Sigmoid colon (tissue), 7 donors: ENCODE measurements at regions of chr12 and their contacts with region 1.

Region 1: DNA sequence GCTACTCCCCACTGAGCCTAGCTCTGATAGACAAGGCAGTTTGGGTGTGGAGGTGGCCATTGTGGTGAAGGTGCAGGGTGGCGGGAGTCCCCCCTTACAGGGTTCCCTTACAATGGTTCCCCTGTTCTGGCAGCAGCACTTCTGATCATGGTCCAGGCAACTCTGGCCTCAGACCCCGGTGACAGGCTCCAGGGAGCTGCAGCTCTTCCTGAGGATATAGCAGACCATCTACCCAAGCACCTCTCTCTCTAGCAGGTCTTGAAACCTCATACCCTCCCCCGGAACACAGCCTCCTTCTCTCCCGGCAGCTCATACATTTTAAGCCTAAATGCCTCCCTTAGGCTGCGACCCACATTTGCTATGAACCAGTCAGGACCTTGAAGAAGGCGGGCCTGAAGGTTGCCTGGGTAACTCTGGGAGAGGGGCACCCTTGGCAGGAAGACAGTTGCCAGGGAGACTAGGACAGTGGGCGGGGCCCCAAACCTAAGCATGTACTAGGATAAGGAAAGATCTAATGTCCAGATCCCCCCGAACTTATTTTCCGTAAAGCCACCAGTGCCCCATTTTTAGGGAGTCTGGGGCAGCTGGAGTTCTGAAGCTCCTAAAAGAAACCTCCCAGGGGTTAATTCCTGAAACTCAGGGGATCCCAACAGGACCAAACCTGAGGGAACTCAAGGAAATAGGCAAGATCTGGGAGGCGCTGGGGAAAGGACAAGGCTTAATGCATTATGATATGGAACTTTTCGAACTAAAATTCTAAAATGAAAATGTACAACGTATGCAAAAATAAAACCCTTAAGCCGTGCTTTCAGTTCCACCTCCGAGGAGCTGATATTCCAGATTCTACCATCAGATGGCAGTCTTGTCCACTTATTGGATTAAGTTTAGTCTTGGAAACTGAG is 4.5 kb upstream of the GDF11 start:
- DNase-seq: peak; percentile 91
- H3K4me3 ChIP-seq: peak overlapping the region; percentile 39 to 62 (median 52)
- H3K27ac ChIP-seq: peak overlapping the region; percentile 78 to 83 (median 80)
- H3K4me1 ChIP-seq: peaks cover 0 to 28% (median 20%) of the 10 kb centered on the region in 4 donors
- H3K27me3 ChIP-seq: no peaks in the 10 kb centered on the region
- CTCF ChIP-seq: peak; percentile 78 to 95 (median 88)
- EP300 ChIP-seq: no peak
- POLR2A ChIP-seq: no peak

Region 2: GRCh38 chr12:55619354-55620138 is 118.8 kb before region 1 on chr12:
- intact Hi-C with region 1: no loop called
- DNase-seq: no peak
- H3K4me3 ChIP-seq: no peak overlapping the region
- H3K27ac ChIP-seq: no peak overlapping the region
- H3K4me1 ChIP-seq: no peaks in the 10 kb centered on the region
- H3K27me3 ChIP-seq: no peaks in the 10 kb centered on the region
- CTCF ChIP-seq: peak; percentile 56 to 73 (median 65)
- EP300 ChIP-seq: no peak
- POLR2A ChIP-seq: no peak

Region 3: DNA sequence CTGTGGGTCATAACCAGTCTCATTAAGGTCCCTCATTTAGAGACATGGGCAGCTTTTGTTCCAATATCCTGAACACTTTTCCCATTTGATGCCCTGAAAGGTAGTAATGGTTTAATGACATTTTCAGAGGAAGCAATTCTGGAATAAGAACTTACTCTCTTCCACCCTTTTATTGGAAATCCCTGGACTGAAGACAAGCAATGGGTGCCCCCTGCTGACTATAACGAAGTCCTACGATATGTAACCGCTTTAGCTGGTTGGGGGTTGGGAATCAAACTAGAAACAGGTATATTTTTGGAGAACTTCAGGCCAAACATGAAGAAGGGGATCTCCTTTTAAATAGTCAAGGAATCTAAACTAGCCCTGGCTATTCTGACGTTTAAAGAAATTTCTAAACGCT is 58.7 kb after region 1 on chr12:
- intact Hi-C with region 1: loop called (anchors 2 kb)
- DNase-seq: no peak
- H3K4me3 ChIP-seq: no peak overlapping the region
- H3K27ac ChIP-seq: no peak overlapping the region
- H3K4me1 ChIP-seq: no peaks in the 10 kb centered on the region
- H3K27me3 ChIP-seq: no peaks in the 10 kb centered on the region
- CTCF ChIP-seq: peak; percentile 20 to 53 (median 32)
- EP300 ChIP-seq: no peak
- POLR2A ChIP-seq: no peak

Region 4: DNA sequence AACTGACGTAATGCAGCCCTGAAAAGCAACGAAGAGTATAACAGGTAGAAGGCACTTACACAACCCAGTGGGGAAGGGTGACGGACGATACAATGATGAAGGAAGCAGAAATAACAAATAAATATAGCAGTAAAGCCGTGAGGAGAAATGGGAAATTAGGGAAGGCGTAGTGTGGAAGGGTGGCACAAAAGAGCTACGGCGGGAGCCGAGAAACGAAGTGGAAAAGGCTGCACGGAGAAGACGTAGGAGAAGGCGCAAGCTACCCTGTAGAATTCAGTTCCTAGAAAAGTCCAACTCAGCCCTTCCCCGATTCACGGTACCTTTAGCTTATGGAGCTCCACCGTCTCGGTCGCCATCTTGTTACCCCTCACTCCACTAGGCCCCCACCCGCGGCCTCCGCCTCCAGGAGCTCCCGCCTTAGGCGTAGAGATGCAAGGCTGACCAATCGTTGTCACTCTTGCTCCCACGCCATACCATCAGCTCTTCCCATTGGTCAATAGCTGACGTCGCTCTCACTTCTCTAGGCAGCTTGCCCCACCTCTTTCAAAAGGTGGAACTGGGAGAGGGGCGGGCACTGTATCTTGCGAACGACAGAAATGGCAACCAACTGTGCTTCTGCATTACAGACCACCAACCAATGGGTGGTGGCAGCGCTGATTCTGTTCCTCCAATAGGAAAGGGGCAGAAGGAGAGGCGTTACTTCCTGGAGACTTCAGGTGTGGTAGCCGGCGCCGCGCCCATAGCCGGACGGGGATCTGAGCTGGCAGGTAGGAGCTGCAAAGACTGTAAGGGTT is 79.2 kb after region 1 on chr12 and contains the starts of genes ORMDL2 and SARNP:
- intact Hi-C with region 1: loop called (anchors 5 kb)
- DNase-seq: peak; percentile 99
- H3K4me3 ChIP-seq: peak within 1 kb of the TSS; percentile 66 to 87 (median 84)
- H3K27ac ChIP-seq: peak within 1 kb of the TSS; percentile 89 to 96 (median 93)
- H3K4me1 ChIP-seq: peaks cover 0 to 43% (median 39%) of the 10 kb centered on the region in 4 donors
- H3K27me3 ChIP-seq: no peaks in the 10 kb centered on the region
- CTCF ChIP-seq: no peak
- EP300 ChIP-seq: no peak
- POLR2A ChIP-seq: peak; percentile 65 to 73
- total RNA-seq, gene ORMDL2: 9.1 to 18.1 (median 12.0) TPM
- total RNA-seq, gene SARNP: 49.0 to 81.9 (median 76.9) TPM

Region 5: GRCh38 chr12:55940065-55940732 is 201.8 kb after region 1 on chr12:
- intact Hi-C with region 1: loop called (anchors 1 kb)
- DNase-seq: peak; percentile 93
- H3K4me3 ChIP-seq: peak overlapping the region in 3 of 4 donors; percentile 10 to 19 (median 19)
- H3K27ac ChIP-seq: peak overlapping the region; percentile 14 to 59 (median 54)
- H3K4me1 ChIP-seq: peaks cover 0 to 12% (median 7%) of the 10 kb centered on the region in 4 donors
- H3K27me3 ChIP-seq: no peaks in the 10 kb centered on the region
- CTCF ChIP-seq: peak; percentile 78 to 90 (median 84)
- EP300 ChIP-seq: no peak
- POLR2A ChIP-seq: no peak

Region 6: GRCh38 chr12:56041552-56042429 is 303.4 kb after region 1 on chr12 and contains the start of gene RPS26:
- intact Hi-C with region 1: loop called (anchors 5 kb)
- DNase-seq: peak; percentile 98
- H3K4me3 ChIP-seq: peak within 1 kb of the TSS; percentile 56 to 94 (median 72)
- H3K27ac ChIP-seq: peak within 1 kb of the TSS; percentile 91 to 96 (median 94)
- H3K4me1 ChIP-seq: peaks cover 0 to 20% (median 19%) of the 10 kb centered on the region in 4 donors
- H3K27me3 ChIP-seq: no peaks in the 10 kb centered on the region
- CTCF ChIP-seq: peak in 1 of 4 experiments; percentile 40
- EP300 ChIP-seq: peak in 2 of 4 donors; percentile 32 to 52
- POLR2A ChIP-seq: peak; percentile 97
- total RNA-seq, gene RPS26: 130 to 3,746 (median 1,580) TPM